ENCODE measurements at regions of chr1 and their contacts with region 1.

Region 1: GRCh38 chr1:180154325-180155181 is at the start of gene QSOX1:
- DNase-seq: peak; percentile 91
- H3K4me3 Mint-ChIP-seq: peak within 1 kb of the TSS; percentile 89
- H3K27ac Mint-ChIP-seq: peak within 1 kb of the TSS; percentile 67
- H3K4me1 Mint-ChIP-seq: peaks cover 22% of the 10 kb centered on the region
- H3K27me3 Mint-ChIP-seq: no peaks in the 10 kb centered on the region
- total RNA-seq, gene QSOX1: 27.6 to 31.9 TPM

Region 2: DNA sequence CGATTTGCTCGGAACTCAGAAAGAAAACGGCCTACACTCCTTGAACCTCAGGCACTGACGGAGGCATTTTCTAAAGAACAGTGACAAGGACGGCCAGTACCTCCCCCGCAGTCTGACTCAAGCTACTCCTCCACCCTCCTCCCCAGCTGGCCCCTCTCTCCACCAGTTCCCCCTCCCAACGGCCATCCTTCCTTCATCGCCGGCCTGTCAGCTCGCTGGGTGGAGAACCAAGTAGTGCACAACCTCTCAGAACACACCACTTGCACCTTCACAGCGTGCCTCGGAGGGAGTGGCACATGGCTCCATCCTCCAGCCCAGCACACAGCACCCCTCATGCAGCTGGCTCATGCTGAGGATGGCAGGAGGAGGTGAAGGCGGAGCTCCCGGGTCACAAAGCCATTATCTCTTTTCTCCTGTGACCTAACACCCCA is 335.8 kb before region 1 on chr1:
- CTCF ChIA-PET with region 1: interaction called, 5 read pairs
- intact Hi-C with region 1: loop called (anchors 1 kb)
- DNase-seq: no peak
- H3K4me3 Mint-ChIP-seq: no peak overlapping the region
- H3K27ac Mint-ChIP-seq: no peak overlapping the region
- H3K4me1 Mint-ChIP-seq: peaks cover 18% of the 10 kb centered on the region
- H3K27me3 Mint-ChIP-seq: no peaks in the 10 kb centered on the region

Region 3: GRCh38 chr1:179831852-179832699 is 322.5 kb before region 1 on chr1:
- CTCF ChIA-PET with region 1: no interaction called
- intact Hi-C with region 1: loop called (anchors 1 kb)
- DNase-seq: peak; percentile 57
- H3K4me3 Mint-ChIP-seq: no peak overlapping the region
- H3K27ac Mint-ChIP-seq: peak overlapping the region; percentile 15
- H3K4me1 Mint-ChIP-seq: peaks cover 30% of the 10 kb centered on the region
- H3K27me3 Mint-ChIP-seq: no peaks in the 10 kb centered on the region

Region 4: GRCh38 chr1:179954493-179955297 is 199.9 kb before region 1 on chr1 and contains the start of gene CEP350:
- CTCF ChIA-PET with region 1: no interaction called
- intact Hi-C with region 1: loop called (anchors 1 kb)
- DNase-seq: peak; percentile 99
- H3K4me3 Mint-ChIP-seq: peak within 1 kb of the TSS; percentile 85
- H3K27ac Mint-ChIP-seq: peak within 1 kb of the TSS; percentile 95
- H3K4me1 Mint-ChIP-seq: peaks cover 41% of the 10 kb centered on the region
- H3K27me3 Mint-ChIP-seq: no peaks in the 10 kb centered on the region
- total RNA-seq, gene CEP350: 30.3 to 36.0 TPM